Activated CD4-positive, alpha-beta memory T cell treated with anti-CD3 and anti-CD28 coated beads for 36 hours (primary cell): ENCODE measurements at regions of chr14 and their contacts with region 1.

Region 1: GRCh38 chr14:53062856-53063255 is 90.3 kb downstream of the DDHD1 start:
- DNase-seq: no peak
- H3K4me3 Mint-ChIP-seq: no peak overlapping the region
- H3K27ac Mint-ChIP-seq: no peak overlapping the region
- H3K4me1 Mint-ChIP-seq: peaks cover 7% of the 10 kb centered on the region
- H3K27me3 Mint-ChIP-seq: no peaks in the 10 kb centered on the region

Region 2: GRCh38 chr14:53093206-53093605 is 30.4 kb after region 1 on chr14:
- CTCF ChIA-PET with region 1: no interaction called
- POLR2A ChIA-PET with region 1: no interaction called
- intact Hi-C with region 1: loop called (anchors 5 kb)
- DNase-seq: no peak
- H3K4me3 Mint-ChIP-seq: no peak overlapping the region
- H3K27ac Mint-ChIP-seq: no peak overlapping the region
- H3K4me1 Mint-ChIP-seq: peaks cover 11% of the 10 kb centered on the region
- H3K27me3 Mint-ChIP-seq: no peaks in the 10 kb centered on the region